ENCODE measurements at regions of chr1 and their contacts with region 1.

Region 1: DNA sequence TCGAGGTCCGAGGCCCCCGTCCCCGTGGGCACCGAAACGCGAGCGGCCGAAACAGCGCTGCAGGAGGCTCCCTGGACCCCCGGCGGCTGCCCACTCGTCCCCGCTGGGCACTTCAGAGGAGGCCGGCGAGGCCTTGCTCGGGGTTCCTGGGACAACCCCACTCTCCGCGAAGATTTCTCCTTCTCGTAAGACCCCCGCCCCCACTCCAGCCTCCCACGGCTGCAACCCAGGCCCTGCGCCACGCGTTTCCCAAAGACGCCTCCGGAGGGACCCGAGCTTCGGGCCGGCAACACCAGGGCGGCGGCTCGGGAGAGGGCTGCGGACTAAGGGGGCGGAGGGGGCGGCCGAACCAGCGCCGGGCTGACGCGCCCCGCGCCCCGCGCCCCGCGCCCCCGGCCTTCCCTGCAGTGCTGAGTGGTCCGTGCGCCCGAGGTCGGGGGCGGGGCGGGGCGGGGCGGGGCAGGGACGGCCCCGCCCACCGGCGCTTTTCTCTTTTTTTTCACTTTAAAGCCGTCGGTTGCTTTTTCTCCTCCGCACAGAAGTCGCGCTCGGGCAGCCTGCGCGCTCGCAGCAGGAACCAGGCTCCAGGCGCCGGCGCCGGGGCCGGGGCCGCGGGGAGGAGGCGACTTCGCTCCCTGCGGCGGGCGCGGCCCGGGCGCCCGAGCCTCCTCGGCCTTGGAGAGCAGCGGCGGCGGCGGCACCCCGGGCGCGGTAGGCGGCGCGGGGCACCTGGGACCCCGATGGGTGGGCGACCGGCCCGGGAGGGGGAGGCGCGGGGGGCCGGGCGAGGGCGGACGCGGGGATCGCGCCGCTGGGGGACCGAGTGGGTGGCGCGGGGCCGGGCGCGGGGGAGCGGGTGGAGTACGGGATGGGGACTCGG is at the start of gene SPSB1:
- DNase-seq: peak; percentile 56
- H3K4me3 Mint-ChIP-seq: peak within 1 kb of the TSS; percentile 46
- H3K27ac Mint-ChIP-seq: no peak within 1 kb of the TSS
- H3K4me1 Mint-ChIP-seq: peaks cover 24% of the 10 kb centered on the region
- H3K27me3 Mint-ChIP-seq: no peaks in the 10 kb centered on the region
- total RNA-seq, gene SPSB1: 8.9 and 10.0 TPM in 2 replicates

Region 2: GRCh38 chr1:9181176-9181906 is 111.3 kb before region 1 on chr1:
- intact Hi-C with region 1: no loop called
- DNase-seq: peak; percentile 66
- H3K4me3 Mint-ChIP-seq: peak overlapping the region; percentile 90
- H3K27ac Mint-ChIP-seq: peak overlapping the region; percentile 85
- H3K4me1 Mint-ChIP-seq: peaks cover 22% of the 10 kb centered on the region
- H3K27me3 Mint-ChIP-seq: peaks cover 11% of the 10 kb centered on the region

Region 3: DNA sequence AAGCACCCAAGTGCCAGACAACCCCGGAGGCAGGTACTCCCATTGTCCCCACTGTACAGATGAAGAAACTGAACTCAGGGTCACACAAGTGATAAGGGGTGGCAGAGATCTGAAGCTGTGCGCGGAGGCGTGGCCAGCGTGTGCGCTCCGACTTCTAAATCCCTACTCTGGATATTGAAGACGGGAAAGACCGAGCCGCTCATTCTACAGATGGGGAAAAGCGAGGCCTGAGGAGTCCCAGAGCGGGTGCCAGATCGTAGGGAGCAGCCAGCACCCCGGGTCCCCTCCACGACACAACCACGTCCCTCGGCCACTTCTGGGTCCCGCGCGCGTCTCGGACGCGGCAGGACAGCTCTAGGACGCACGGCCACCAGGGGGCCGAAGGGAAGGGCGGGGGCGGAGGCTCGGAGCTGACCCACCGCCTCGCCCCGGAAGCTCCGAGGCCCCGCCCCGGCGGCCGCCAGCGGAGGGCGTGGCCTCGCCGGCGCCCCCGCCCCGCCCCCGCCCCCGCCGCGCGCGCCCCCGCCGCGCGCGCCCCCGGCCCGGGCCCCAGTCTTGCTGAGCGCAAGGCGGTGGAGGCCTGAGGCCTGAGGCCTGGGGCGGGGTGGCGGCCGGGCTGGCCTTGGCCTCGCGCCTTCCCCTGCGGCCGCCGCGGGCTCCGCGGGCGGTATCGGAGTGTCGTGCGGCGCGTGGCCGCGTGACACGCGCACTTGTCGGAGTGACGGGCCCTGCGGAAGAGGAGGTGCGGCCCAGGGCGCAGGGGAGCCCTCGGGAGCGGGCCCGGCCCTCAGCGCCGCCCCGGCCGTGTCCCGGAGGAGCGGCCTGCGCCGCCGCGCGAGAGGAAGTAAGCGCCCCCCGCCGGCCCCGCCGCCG is 58.1 kb before region 1 on chr1 and contains the start of gene H6PD:
- intact Hi-C with region 1: loop called (anchors 1 kb)
- DNase-seq: peak; percentile 82
- H3K4me3 Mint-ChIP-seq: peak within 1 kb of the TSS; percentile 94
- H3K27ac Mint-ChIP-seq: peak within 1 kb of the TSS; percentile 98
- H3K4me1 Mint-ChIP-seq: peaks cover 36% of the 10 kb centered on the region
- H3K27me3 Mint-ChIP-seq: peaks cover 3% of the 10 kb centered on the region
- total RNA-seq, gene H6PD: 15.7 TPM in 2 replicates

Region 4: DNA sequence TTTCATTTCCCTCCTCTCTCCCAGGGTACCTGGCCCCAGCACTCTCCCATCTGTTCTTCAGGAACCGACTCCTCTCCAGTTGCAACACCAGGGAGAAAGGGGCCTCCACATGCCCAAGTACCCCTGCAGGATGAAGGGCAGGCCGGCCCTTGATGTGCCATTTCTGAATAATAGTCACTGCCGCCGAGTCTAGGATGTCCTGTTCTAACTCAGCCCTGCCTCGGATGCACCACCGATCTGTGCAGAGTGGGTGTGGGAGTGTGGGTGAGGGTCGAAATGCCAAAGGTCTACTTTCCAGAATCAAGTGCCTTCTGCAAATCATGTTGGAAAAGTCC is 25.3 kb before region 1 on chr1:
- intact Hi-C with region 1: loop called (anchors 1 kb)
- DNase-seq: no peak
- H3K4me3 Mint-ChIP-seq: no peak overlapping the region
- H3K27ac Mint-ChIP-seq: no peak overlapping the region
- H3K4me1 Mint-ChIP-seq: peaks cover 5% of the 10 kb centered on the region
- H3K27me3 Mint-ChIP-seq: no peaks in the 10 kb centered on the region

Region 5: GRCh38 chr1:9275567-9276034 is 17.0 kb before region 1 on chr1:
- intact Hi-C with region 1: loop called (anchors 2 kb)
- DNase-seq: peak; percentile 58
- H3K4me3 Mint-ChIP-seq: peak overlapping the region; percentile 45
- H3K27ac Mint-ChIP-seq: peak overlapping the region; percentile 65
- H3K4me1 Mint-ChIP-seq: peaks cover 39% of the 10 kb centered on the region
- H3K27me3 Mint-ChIP-seq: peaks cover 2% of the 10 kb centered on the region

Region 6: GRCh38 chr1:9317591-9318417 is 25.2 kb after region 1 on chr1:
- intact Hi-C with region 1: loop called (anchors 1 kb)
- DNase-seq: no peak
- H3K4me3 Mint-ChIP-seq: peak overlapping the region; percentile 66
- H3K27ac Mint-ChIP-seq: peak overlapping the region; percentile 79
- H3K4me1 Mint-ChIP-seq: peaks cover 63% of the 10 kb centered on the region
- H3K27me3 Mint-ChIP-seq: no peaks in the 10 kb centered on the region

Region 7: GRCh38 chr1:9413148-9413876 is 120.7 kb after region 1 on chr1:
- intact Hi-C with region 1: loop called (anchors 1 kb)
- DNase-seq: peak; percentile 52
- H3K4me3 Mint-ChIP-seq: peak overlapping the region; percentile 57
- H3K27ac Mint-ChIP-seq: peak overlapping the region; percentile 82
- H3K4me1 Mint-ChIP-seq: peaks cover 50% of the 10 kb centered on the region
- H3K27me3 Mint-ChIP-seq: peaks cover 11% of the 10 kb centered on the region

Region 8: DNA sequence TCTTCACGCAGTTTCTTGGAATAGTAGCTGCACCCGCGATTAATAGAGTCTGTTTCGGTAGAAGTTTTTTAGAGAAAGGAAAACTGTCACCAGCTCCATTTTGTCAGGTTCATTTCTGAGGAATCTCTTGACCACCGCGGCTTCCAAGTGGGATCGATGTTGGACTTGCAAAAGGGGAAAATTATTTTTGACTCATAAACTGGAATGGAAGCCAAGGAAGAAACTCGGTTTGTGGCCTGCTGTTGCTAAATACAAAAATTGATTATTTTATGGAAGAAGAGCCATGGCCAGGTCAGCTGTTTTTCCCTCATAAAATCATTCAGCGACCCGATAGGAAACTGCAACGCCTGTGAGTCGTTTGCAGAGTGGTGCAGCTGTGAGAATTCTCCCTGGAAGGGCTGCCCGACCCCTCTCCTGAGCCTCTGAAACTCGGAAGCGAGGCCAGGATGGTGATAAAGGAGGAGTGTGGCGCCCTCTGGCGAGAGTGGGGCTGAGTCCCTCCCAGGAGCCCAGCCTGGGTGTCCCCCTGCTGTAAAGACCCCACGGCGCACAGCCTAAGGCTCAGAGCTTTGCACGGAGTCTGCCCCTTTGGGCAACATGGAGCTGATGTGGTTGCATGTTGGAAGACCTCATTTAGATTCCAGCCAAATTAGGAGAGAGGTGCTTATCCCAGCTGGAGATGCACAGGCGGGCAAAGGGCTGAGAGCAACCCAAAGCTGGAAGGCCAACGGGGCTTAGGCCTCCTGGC is 163.1 kb after region 1 on chr1:
- intact Hi-C with region 1: loop called (anchors 1 kb)
- DNase-seq: peak; percentile 21
- H3K4me3 Mint-ChIP-seq: no peak overlapping the region
- H3K27ac Mint-ChIP-seq: no peak overlapping the region
- H3K4me1 Mint-ChIP-seq: peaks cover 7% of the 10 kb centered on the region
- H3K27me3 Mint-ChIP-seq: peaks cover 14% of the 10 kb centered on the region

Region 9: DNA sequence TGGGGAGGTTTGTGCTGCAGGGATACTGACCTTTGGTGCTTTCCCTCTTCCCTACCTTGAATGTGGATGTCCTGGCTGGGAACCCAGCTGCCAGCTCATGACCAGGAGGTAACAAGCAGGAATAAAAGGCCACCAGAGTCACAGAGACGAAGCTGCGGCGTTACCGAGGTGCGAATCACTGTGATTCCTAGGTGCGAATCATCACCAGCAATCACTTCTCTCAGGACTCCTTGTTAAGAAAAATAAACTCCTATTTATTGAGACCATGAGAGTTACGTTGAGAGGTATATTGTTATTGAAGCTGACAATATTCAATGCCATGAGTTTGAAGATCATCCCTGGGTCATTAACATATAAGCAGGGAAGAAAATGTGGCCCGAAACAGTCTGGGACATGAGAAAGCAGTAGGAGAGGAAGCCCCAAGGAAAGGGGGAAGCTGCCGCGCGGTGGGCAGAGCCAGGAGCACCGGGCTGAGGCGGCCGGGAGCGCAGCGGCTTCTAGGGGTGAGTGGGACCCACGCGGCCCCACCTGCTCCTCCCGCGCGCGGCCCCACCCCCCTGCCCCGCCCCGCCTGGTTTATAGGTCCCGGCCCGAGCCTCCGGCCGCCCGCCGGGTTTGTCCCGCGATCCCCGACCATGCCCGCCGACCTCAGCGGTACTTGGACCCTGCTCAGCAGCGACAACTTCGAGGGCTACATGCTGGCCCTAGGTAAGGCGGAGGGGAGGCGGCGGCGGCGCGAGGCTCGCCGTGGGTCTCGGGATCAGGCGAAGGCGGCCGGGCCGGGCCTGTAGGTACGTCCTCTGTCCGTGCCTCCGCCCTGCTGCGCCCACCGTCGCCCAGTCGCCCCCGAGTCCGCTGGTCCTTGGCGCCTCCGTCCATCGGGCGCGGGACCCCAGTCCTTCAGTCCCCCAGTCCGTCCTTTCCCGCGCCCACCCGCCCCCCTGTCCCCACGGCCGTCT is 704.3 kb after region 1 on chr1 and contains the start of gene RBP7:
- intact Hi-C with region 1: no loop called
- DNase-seq: no peak
- H3K4me3 Mint-ChIP-seq: peak within 1 kb of the TSS; percentile 73
- H3K27ac Mint-ChIP-seq: no peak within 1 kb of the TSS
- H3K4me1 Mint-ChIP-seq: peaks cover 4% of the 10 kb centered on the region
- H3K27me3 Mint-ChIP-seq: peaks cover 32% of the 10 kb centered on the region
- total RNA-seq, gene RBP7: not detected in 2 replicates